ENCODE measurements at regions of chr1 and their contacts with region 1.

Region 1: GRCh38 chr1:89605692-89606091 is 27.2 kb upstream of the LRRC8C start:
- DNase-seq: no peak
- ATAC-seq: no peak
- H3K4me3 Mint-ChIP-seq: no peak overlapping the region
- H3K27ac Mint-ChIP-seq: peak overlapping the region; percentile 90
- H3K4me1 Mint-ChIP-seq: peaks cover 90% of the 10 kb centered on the region
- H3K27me3 Mint-ChIP-seq: no peaks in the 10 kb centered on the region

Region 2: GRCh38 chr1:89302697-89303332 is 302.9 kb before region 1 on chr1:
- CTCF ChIA-PET with region 1: no interaction called
- POLR2A ChIA-PET with region 1: no interaction called
- DNase-seq: no peak
- ATAC-seq: no peak
- H3K4me3 Mint-ChIP-seq: no peak overlapping the region
- H3K27ac Mint-ChIP-seq: no peak overlapping the region
- H3K4me1 Mint-ChIP-seq: peaks cover 48% of the 10 kb centered on the region
- H3K27me3 Mint-ChIP-seq: no peaks in the 10 kb centered on the region

Region 3: DNA sequence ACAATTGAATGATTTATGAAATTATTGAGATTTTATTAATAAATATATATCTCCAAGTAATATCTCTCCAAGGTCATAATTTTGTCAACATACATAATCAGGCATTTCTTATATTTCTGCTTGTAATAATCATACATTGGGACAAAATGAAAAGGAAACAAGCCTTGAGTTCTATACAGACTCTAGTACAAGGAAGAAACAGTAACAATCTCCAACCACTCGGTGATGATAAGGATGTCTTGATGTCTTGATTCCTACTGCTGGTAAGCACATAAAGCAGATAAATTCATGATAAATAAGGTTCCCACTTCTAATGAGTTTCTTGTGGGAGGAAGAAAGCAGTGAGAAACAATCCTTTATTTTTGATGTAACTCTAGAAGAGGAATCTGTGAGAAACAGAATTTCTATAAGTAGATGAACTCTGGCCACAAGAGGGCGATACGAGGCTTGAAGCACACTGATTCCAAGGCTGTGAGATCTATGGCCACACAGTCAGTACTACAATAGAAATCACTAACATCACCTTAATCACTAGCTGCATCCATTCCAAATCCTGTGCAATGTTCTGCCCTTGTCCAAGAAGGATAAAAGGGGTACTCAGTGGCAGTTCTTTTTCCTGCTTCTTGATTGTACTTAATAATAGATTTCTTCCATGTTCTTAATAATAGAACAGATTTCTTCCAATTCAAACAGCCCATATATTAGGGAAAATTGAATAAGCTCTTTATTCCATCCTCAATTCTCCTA is 122.5 kb before region 1 on chr1:
- CTCF ChIA-PET with region 1: interaction called, 12 read pairs
- POLR2A ChIA-PET with region 1: interaction called, 4 read pairs
- DNase-seq: peak; percentile 91
- ATAC-seq: peak; percentile 80
- H3K4me3 Mint-ChIP-seq: no peak overlapping the region
- H3K27ac Mint-ChIP-seq: no peak overlapping the region
- H3K4me1 Mint-ChIP-seq: peaks cover 15% of the 10 kb centered on the region
- H3K27me3 Mint-ChIP-seq: peaks cover 2% of the 10 kb centered on the region

Region 4: DNA sequence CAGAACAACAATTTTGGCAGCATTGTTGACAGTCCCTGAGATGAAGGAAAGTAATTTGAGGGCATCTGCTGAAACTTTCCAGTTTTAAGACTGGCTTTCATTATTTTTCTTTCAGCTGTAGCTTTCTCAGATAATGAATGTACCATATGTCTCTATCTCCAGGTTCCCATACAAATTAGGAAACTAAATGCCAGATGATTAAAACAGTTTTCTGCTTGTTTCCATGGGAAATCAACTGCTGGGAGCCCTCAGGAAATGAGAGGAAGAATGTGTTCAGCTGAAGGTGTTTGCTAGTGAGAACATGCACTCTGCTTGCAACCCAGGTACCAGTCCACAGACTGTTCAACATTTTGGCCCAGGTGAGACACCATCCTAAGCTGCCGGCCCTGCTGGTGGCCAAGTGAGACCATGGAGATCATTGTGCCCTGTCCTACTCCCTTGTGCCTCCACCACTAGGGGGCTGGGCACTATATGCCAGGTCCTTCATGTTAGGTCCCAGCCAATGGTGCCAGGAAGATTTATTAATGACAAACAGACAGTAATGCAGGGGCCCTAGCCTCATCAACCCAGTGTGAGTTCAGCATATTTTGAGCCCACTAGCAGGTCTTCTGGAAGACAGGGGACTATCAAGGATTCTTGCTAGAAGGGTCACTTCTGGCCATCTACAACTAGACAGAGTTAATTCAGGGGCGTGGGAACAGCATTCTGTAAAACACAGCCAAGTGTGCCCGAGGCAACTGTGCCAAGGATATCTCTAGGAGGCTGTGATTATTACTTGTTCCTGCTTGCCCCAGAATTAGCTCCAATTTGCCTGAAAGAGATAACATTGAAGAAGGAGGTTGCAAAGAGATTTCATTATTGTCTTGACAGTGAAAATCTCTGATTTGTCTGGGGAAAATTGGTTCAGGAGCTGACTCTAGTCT is 10.2 kb after region 1 on chr1:
- CTCF ChIA-PET with region 1: interaction called, 50 read pairs
- POLR2A ChIA-PET with region 1: interaction called, 51 read pairs
- DNase-seq: no peak
- ATAC-seq: no peak
- H3K4me3 Mint-ChIP-seq: no peak overlapping the region
- H3K27ac Mint-ChIP-seq: no peak overlapping the region
- H3K4me1 Mint-ChIP-seq: peaks cover 63% of the 10 kb centered on the region
- H3K27me3 Mint-ChIP-seq: no peaks in the 10 kb centered on the region

Region 5: GRCh38 chr1:89622895-89623294 is 17.2 kb after region 1 on chr1:
- CTCF ChIA-PET with region 1: interaction called, 40 read pairs
- POLR2A ChIA-PET with region 1: interaction called, 201 read pairs
- DNase-seq: peak; percentile 19
- ATAC-seq: no peak
- H3K4me3 Mint-ChIP-seq: no peak overlapping the region
- H3K27ac Mint-ChIP-seq: no peak overlapping the region
- H3K4me1 Mint-ChIP-seq: peaks cover 46% of the 10 kb centered on the region
- H3K27me3 Mint-ChIP-seq: no peaks in the 10 kb centered on the region

Region 6: GRCh38 chr1:89657886-89658285 is 52.2 kb after region 1 on chr1:
- CTCF ChIA-PET with region 1: interaction called, 11 read pairs
- POLR2A ChIA-PET with region 1: interaction called, 7 read pairs
- DNase-seq: peak; percentile 59
- ATAC-seq: peak; percentile 84
- H3K4me3 Mint-ChIP-seq: peak overlapping the region; percentile 60
- H3K27ac Mint-ChIP-seq: peak overlapping the region; percentile 79
- H3K4me1 Mint-ChIP-seq: peaks cover 92% of the 10 kb centered on the region
- H3K27me3 Mint-ChIP-seq: no peaks in the 10 kb centered on the region

Region 7: DNA sequence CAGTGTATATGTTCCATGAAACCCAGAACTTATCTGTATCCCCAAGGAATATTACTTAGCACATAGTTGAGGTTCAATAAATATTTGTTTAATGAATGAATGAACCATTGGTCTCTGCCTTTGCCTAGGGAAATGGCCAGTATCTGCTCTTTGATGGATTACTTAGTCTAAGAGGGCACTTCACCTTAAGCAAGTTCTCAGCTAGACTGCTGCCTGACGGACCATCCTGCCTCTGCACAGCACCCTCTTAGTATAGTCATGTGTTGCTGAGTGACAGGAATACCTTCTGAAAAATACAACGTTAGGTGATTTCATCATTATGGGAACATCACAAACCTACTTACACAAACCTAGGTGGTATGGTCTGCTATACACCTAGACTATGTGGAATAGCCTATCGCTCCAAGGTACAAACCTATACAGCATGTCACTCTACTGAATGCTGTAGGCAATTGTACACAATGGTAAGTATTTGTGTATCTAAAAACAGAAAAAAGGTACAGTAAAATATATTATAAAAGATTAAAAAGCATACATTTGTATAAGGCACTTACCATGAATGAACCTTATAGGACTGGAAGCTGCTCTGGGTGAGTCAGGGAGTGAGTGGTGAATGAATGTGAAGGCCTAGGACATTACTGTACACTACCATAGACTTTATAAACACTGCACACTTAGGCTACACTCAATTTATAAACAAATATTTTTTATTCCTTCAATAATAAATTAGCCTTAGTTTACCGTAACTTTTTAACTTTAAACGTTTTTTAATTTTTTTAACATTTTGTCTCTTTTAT is 131.4 kb after region 1 on chr1:
- CTCF ChIA-PET with region 1: no interaction called
- POLR2A ChIA-PET with region 1: no interaction called
- DNase-seq: no peak
- ATAC-seq: no peak
- H3K4me3 Mint-ChIP-seq: no peak overlapping the region
- H3K27ac Mint-ChIP-seq: no peak overlapping the region
- H3K4me1 Mint-ChIP-seq: peaks cover 42% of the 10 kb centered on the region
- H3K27me3 Mint-ChIP-seq: no peaks in the 10 kb centered on the region

Region 8: DNA sequence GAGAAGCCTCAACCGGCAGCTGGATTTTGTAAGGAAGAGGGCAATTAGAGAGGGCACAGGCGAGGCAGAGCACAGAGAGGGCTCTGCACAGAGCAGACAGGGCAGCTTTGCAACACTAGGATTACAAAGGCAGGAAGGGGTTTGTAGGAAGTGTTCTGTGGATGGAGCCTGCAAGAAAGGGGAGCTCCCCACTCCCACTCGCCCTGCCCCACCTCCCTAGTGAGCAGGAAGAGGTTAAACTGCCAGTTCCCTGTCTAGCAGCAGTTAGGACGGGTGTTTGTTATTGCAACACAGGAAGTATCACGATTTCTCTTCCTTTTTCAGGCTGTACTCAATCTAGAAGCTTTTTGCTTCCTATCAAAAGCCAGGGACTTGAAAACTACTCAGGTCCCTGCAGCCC is 151.8 kb after region 1 on chr1:
- CTCF ChIA-PET with region 1: interaction called, 54 read pairs
- POLR2A ChIA-PET with region 1: interaction called, 13 read pairs
- DNase-seq: peak; percentile 71
- ATAC-seq: peak; percentile 77
- H3K4me3 Mint-ChIP-seq: peak overlapping the region; percentile 73
- H3K27ac Mint-ChIP-seq: peak overlapping the region; percentile 92
- H3K4me1 Mint-ChIP-seq: peaks cover 89% of the 10 kb centered on the region
- H3K27me3 Mint-ChIP-seq: no peaks in the 10 kb centered on the region